Posterior cingulate gyrus (tissue), 11 donors: ENCODE measurements at regions of chr2 and their contacts with region 1.

Region 1: DNA sequence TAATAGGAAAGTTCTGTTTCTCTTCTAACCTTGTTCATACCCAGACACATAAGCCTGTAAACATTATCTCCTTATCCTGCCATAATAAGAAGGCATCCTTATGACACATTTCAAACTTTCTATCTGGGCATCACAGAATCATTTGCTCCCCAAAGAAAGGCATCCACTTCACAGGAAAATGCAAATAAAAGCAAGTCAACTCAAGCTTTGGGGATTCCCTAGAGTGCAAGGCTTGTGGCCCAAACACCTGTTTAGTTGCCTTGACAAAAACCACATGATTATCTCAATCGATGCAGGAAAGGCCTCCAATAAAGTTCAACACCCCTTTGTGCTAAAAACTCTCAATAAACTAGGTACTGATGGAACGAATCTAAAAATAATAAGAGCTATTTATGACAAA is 195.7 kb upstream of the GALNT5 start:
- DNase-seq: no peak

Region 2: DNA sequence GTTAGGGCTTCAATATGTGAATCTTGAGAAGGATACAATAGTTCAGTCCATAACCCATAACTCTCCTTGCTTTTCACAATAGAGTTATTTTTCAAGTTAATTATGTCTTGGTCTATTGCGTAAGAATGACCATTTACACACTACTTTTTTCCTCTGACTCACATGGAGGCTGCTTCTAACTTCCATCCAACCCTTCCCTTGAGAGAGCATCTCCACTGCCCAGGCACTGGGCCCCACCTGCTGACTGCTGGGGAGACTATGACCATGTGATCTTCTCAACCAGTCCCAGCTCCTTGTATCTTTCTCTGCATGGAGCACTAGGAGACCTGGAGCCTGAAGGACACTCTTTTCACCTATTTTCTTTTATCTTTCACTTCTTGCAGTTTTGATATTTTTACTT is 374.1 kb before region 1 on chr2:
- intact Hi-C with region 1: no loop called
- DNase-seq: no peak

Region 3: DNA sequence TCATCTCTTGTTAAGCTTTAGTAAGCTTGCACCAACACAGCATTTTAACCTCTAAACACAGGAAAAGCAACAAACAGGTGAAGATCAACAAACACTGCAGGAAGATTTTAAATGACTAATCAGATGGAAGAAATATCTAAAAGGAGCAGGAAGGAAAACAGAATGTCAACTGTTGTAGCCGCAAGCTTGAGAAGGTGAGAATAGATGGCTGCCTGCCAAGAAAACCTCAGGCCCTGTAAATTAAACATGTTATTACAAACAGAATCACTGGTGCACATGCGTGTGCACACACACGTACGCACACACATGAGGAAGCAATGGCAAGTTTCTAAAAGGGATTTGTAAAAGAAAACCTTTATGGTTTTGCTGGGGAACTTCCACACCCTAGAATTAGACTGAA is 62.1 kb before region 1 on chr2:
- intact Hi-C with region 1: no loop called
- DNase-seq: no peak

Region 4: GRCh38 chr2:157194097-157194688 is 132.4 kb after region 1 on chr2:
- intact Hi-C with region 1: loop called (anchors 10 kb)
- DNase-seq: no peak